Esophagus squamous epithelium (tissue), 5 donors: ENCODE measurements at regions of chr12 and their contacts with region 1.

Region 1: DNA sequence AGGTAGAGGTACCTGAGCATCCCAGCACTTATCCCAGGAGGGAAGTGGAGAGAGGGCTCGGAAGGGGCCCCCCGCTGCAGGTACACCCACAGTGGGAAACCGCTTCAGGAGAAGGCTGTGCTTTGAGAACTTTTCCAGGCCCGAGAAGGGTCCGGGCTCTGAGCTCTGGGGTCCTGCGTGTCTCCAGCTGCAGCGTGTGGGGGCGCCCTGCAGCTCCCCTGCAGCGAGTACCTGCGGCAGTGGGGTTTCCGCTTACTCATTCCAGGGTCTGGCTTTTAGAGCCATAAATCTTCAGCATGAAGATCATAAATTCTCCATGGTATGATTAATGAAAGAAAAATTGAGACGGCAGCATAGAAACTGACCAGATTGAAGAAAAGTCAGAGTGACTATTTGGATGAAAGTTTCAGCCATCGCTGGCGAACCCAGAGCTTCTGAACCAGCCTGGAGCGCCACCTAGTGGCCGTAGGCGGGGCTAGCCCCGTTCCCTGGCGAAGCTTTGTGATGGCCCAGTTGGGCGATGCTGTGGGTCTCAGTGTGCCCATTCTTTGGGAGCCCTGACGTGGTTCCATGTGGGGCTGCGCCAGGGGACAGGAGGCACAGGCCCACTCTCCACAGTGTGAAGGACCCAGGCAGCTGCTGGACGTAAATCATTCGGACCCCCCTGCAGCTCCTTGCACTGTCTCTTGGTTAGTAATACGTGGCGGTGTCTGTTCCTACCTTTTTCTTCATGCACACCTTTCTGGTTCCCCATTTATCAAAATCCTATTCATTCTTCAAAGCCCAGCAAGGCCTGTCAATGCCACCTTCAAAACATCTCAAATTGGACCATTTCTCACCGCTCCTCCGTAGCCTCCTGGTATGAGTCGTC is 198.2 kb downstream of the TSPAN9 start:
- DNase-seq: no peak
- H3K4me3 ChIP-seq: no peak overlapping the region
- H3K27ac ChIP-seq: no peak overlapping the region
- H3K4me1 ChIP-seq: peaks cover 4 to 28% (median 10%) of the 10 kb centered on the region in 3 donors
- H3K27me3 ChIP-seq: no peaks in the 10 kb centered on the region
- CTCF ChIP-seq: peak; percentile 67 to 97 (median 94)
- POLR2A ChIP-seq: no peak

Region 2: DNA sequence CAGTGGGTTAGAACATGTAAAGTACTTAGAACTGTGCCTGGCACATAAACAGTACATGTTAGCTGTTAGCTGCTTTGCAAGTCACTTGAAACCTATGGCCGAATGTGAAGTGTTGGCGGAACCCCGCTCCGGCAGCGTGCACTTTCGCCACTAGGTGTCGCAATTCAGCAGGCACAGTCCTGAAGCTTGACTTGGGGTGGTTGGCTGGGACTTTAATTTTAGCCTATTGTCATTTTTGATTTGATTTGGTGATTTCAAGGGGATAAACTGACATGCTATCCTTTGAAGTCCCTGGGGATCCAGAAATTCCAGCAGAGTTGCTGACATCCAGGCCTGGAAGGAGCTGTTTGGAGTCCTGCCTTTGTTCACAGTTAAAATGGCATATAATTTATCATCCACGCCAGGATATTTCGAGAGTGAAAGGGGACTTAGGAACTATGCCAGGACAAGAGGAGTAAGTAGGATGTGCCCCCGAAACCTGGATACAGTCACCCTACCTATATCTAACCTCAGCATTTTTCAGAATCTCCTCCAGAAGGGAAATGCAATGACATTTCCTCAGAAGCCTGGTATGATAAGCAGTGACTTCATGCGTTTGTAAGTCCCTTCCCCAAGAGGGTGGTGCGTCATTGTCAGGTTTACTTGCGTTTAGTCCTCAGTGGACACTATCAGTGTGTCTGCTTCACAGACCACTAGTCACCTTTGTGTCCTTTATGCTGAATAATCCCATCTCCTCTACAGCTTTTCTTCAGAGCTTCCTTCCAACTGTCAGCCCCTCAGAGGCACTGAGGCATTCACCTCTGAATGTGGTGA is 201.8 kb before region 1 on chr12:
- intact Hi-C with region 1: loop called (anchors 5 kb)
- DNase-seq: no peak
- H3K4me3 ChIP-seq: no peak overlapping the region
- H3K27ac ChIP-seq: no peak overlapping the region
- H3K4me1 ChIP-seq: peaks cover 15 to 48% (median 16%) of the 10 kb centered on the region in 3 donors
- H3K27me3 ChIP-seq: no peaks in the 10 kb centered on the region
- CTCF ChIP-seq: peak; percentile 88 to 99 (median 94)
- POLR2A ChIP-seq: no peak

Region 3: DNA sequence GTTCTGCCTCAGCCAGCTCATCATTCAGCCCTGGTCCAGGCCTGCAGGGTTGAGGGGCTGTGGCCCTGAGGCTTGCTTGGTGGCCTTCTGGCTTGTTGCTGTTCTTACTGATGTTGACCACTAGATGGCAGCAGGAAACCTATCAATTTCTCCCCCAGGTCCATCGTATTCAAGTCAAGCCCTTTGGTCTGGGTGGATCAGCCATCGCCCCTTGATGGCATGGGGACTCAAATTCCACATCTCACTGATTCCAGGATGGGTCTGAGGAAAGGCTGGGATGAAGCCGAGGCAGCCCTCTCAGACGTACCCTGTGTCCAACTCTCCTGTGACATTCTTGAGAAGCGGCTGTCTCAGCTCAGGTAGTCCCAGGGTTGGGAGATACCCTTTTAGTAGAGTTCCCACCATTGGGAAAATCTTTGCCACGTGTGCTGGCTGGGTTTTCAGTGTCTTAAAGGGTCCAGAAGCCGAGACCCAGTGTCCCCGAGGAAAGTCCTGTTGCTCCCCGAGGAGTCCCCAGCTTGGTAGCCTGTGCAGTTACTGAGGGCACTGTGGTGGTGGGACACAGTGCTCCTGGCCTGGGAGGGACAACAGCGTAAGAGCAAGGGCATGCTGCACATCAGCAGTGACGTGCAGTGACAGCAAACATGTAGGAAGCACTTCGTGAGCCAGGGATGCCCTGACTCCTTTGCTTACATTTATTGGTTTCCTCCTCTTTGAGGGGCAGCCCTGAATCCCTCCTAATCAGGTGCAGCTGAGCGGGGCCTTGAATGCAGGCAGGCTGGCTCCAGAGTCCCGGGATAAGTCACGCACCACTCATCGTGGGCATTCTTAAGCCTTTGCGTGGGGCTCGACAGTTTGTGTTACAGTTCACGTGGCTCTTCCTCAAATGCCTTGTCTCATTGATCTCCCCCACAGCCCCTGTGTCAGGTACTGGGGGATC is 139.6 kb before region 1 on chr12:
- intact Hi-C with region 1: loop called (anchors 5 kb)
- DNase-seq: no peak
- H3K4me3 ChIP-seq: no peak overlapping the region
- H3K27ac ChIP-seq: no peak overlapping the region
- H3K4me1 ChIP-seq: peaks cover 6 to 52% (median 22%) of the 10 kb centered on the region in 3 donors
- H3K27me3 ChIP-seq: no peaks in the 10 kb centered on the region
- CTCF ChIP-seq: peak; percentile 38 to 85 (median 76)
- POLR2A ChIP-seq: no peak

Region 4: GRCh38 chr12:3336606-3337311 is 61.4 kb after region 1 on chr12:
- intact Hi-C with region 1: no loop called
- DNase-seq: no peak
- H3K4me3 ChIP-seq: no peak overlapping the region
- H3K27ac ChIP-seq: peak overlapping the region in 1 of 4 donors; percentile 41
- H3K4me1 ChIP-seq: peaks cover 0 to 20% (median 11%) of the 10 kb centered on the region in 3 donors
- H3K27me3 ChIP-seq: peaks cover 0 to 75% (median 0%) of the 10 kb centered on the region in 4 donors
- CTCF ChIP-seq: no peak
- POLR2A ChIP-seq: no peak